MCF 10A (cell line): ENCODE measurements at regions of chr11 and their contacts with region 1.

Region 1: GRCh38 chr11:46889689-46890475 is 28.5 kb downstream of the LRP4 start:
- DNase-seq: peak; percentile 82
- H3K4me3 Mint-ChIP-seq: no peak overlapping the region
- H3K27ac Mint-ChIP-seq: no peak overlapping the region
- H3K4me1 Mint-ChIP-seq: no peaks in the 10 kb centered on the region
- H3K27me3 Mint-ChIP-seq: no peaks in the 10 kb centered on the region
- CTCF ChIP-seq: peak; percentile 72

Region 2: DNA sequence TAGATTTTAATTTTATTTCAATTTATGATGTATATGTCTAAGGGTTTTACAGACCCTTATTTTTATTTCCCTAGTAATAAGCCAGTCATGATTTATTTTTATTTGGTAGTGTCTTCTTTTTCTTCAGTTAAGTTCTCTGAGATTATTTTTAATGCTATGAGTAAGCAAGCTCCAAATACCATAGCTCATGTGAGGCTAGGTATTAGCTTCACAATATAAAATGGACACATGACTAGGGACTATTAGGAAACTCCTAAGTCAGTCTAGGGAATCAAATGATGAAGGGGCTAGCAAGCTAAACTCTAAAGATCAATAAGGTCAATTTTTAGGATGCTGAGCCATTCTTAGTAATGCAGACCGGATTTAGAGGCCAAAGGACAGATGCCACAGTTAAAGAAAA is 89.7 kb before region 1 on chr11:
- CTCF ChIA-PET with region 1: no interaction called
- POLR2A ChIA-PET with region 1: no interaction called
- intact Hi-C with region 1: no loop called
- DNase-seq: no peak
- H3K4me3 Mint-ChIP-seq: no peak overlapping the region
- H3K27ac Mint-ChIP-seq: no peak overlapping the region
- H3K4me1 Mint-ChIP-seq: no peaks in the 10 kb centered on the region
- H3K27me3 Mint-ChIP-seq: no peaks in the 10 kb centered on the region
- CTCF ChIP-seq: no peak

Region 3: GRCh38 chr11:46916286-46917108 is 26.6 kb after region 1 on chr11:
- CTCF ChIA-PET with region 1: interaction called, 10 read pairs
- POLR2A ChIA-PET with region 1: interaction called, 5 read pairs
- intact Hi-C with region 1: loop called (anchors 2 kb)
- DNase-seq: peak; percentile 65
- H3K4me3 Mint-ChIP-seq: peak overlapping the region; percentile 75
- H3K27ac Mint-ChIP-seq: peak overlapping the region; percentile 14
- H3K4me1 Mint-ChIP-seq: peaks cover 22% of the 10 kb centered on the region
- H3K27me3 Mint-ChIP-seq: no peaks in the 10 kb centered on the region
- CTCF ChIP-seq: no peak

Region 4: DNA sequence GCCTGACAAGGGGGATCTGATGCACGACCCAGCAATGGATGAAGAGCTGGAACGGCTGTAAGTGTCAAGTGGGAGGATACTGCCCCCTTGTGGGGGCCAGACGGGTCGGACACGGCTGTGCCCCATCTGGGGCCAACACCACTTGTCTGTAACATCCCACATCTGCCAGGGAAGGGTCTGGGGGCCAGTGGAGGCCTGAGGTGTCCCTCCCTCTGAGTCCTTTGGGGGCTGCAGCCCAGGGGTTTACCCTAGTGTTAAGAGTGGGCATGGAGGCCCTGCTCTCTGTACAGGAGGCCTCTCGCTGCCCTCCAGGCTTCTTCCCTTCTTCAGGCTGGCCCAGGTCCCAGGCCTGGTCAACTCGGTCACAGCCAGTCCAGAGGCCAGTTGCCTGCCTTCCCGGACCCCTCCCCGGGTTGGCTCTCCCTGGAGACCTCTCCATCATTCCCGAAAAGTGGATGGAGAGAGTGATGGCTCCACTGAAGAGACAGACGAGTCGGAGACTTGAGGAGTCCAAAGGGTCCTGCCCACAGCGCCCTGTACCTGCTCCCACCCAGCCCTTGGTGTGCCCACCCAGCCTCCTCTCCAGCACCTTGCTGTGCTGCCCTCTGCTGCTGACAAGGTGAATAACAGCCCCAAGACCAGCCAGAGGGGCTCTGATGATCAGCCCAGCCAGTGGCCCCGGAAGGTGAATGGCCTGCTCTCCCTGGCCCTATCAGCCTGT is 271.4 kb after region 1 on chr11:
- CTCF ChIA-PET with region 1: interaction called, 99 read pairs
- POLR2A ChIA-PET with region 1: no interaction called
- intact Hi-C with region 1: loop called (anchors 1 kb)
- DNase-seq: peak; percentile 73
- H3K4me3 Mint-ChIP-seq: no peak overlapping the region
- H3K27ac Mint-ChIP-seq: no peak overlapping the region
- H3K4me1 Mint-ChIP-seq: no peaks in the 10 kb centered on the region
- H3K27me3 Mint-ChIP-seq: no peaks in the 10 kb centered on the region
- CTCF ChIP-seq: peak; percentile 60